ENCODE measurements at regions of chr11 and their contacts with region 1.

Region 1: GRCh38 chr11:64778508-64779346 is at the start of gene SF1:
- DNase-seq: peak; percentile 99
- ATAC-seq: peak; percentile 91
- H3K4me3 Mint-ChIP-seq: peak within 1 kb of the TSS; percentile 97
- H3K27ac Mint-ChIP-seq: peak within 1 kb of the TSS; percentile 99
- H3K4me1 Mint-ChIP-seq: peaks cover 57% of the 10 kb centered on the region
- H3K27me3 Mint-ChIP-seq: no peaks in the 10 kb centered on the region
- total RNA-seq, gene SF1: 318 to 362 TPM

Region 2: GRCh38 chr11:64358907-64359711 is 419.6 kb before region 1 on chr11 and contains the start of gene RPS6KA4:
- CTCF ChIA-PET with region 1: no interaction called
- POLR2A ChIA-PET with region 1: no interaction called
- intact Hi-C with region 1: loop called in 1 of 2 experiments (anchors 2 kb)
- DNase-seq: peak; percentile 80
- ATAC-seq: peak; percentile 69
- H3K4me3 Mint-ChIP-seq: peak within 1 kb of the TSS; percentile 85
- H3K27ac Mint-ChIP-seq: peak within 1 kb of the TSS; percentile 56
- H3K4me1 Mint-ChIP-seq: peaks cover 36% of the 10 kb centered on the region
- H3K27me3 Mint-ChIP-seq: no peaks in the 10 kb centered on the region
- total RNA-seq, gene RPS6KA4: 22.0 to 30.2 TPM

Region 3: GRCh38 chr11:64810271-64810890 is 31.7 kb after region 1 on chr11 and contains the start of gene MEN1:
- CTCF ChIA-PET with region 1: interaction called, 4 read pairs
- POLR2A ChIA-PET with region 1: interaction called, 6 read pairs
- intact Hi-C with region 1: loop called (anchors 1 to 2 kb)
- DNase-seq: peak; percentile 92
- ATAC-seq: peak; percentile 95
- H3K4me3 Mint-ChIP-seq: peak within 1 kb of the TSS; percentile 93
- H3K27ac Mint-ChIP-seq: peak within 1 kb of the TSS; percentile 85
- H3K4me1 Mint-ChIP-seq: peaks cover 21% of the 10 kb centered on the region
- H3K27me3 Mint-ChIP-seq: no peaks in the 10 kb centered on the region
- total RNA-seq, gene MEN1: 34.8 to 38.5 TPM

Region 4: DNA sequence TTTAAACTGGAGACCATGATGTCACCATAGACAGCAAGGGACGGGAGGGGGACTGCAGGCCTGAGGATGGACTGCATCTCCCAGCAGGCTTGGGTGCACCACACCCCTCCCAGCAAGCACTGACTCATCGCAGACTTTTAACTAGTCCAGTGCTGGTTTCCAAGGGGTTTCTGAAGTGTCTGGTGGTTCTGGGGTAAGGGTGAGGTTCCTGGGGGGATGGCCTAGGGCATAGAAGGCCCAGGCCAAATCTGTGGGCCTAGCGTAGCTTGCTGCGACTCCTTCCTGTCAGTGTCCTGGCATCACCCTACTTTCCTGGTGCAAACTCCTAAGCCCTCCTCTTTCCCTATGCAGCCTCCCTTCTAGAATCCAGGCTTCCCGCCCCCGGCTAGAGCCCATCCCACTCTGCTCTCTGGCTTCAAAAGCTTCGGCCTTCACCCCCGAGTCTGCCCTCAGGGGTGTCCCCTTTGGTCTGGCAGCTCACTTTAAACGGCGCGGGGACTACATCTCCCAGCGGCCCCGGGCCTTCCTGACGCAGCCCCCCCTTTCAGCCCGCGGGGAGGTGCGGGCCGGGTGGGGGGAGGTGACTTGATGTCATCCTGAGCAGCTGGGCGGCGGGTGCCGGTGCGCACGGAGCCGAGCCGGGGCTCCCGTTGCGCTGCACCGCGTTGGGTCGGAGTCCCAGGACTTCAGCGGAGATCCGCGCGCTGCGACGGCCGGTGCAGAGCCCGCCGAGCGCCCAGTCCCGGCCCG is 145.6 kb after region 1 on chr11 and contains the start of gene PPP2R5B:
- CTCF ChIA-PET with region 1: no interaction called
- POLR2A ChIA-PET with region 1: no interaction called
- intact Hi-C with region 1: loop called in 1 of 2 experiments (anchors 1 kb)
- DNase-seq: peak; percentile 95
- ATAC-seq: peak; percentile 95
- H3K4me3 Mint-ChIP-seq: peak within 1 kb of the TSS; percentile 81
- H3K27ac Mint-ChIP-seq: peak within 1 kb of the TSS; percentile 98
- H3K4me1 Mint-ChIP-seq: peaks cover 9% of the 10 kb centered on the region
- H3K27me3 Mint-ChIP-seq: no peaks in the 10 kb centered on the region
- total RNA-seq, gene PPP2R5B: 13.2 to 13.5 TPM

Region 5: GRCh38 chr11:65134386-65135253 is 355.9 kb after region 1 on chr11 and contains the start of gene SYVN1:
- CTCF ChIA-PET with region 1: no interaction called
- POLR2A ChIA-PET with region 1: no interaction called
- intact Hi-C with region 1: loop called in 1 of 2 experiments (anchors 1 kb)
- DNase-seq: peak; percentile 95
- ATAC-seq: peak; percentile 91
- H3K4me3 Mint-ChIP-seq: peak within 1 kb of the TSS; percentile 97
- H3K27ac Mint-ChIP-seq: peak within 1 kb of the TSS; percentile 97
- H3K4me1 Mint-ChIP-seq: peaks cover 27% of the 10 kb centered on the region
- H3K27me3 Mint-ChIP-seq: no peaks in the 10 kb centered on the region
- total RNA-seq, gene SYVN1: 24.3 to 31.1 TPM

Region 6: DNA sequence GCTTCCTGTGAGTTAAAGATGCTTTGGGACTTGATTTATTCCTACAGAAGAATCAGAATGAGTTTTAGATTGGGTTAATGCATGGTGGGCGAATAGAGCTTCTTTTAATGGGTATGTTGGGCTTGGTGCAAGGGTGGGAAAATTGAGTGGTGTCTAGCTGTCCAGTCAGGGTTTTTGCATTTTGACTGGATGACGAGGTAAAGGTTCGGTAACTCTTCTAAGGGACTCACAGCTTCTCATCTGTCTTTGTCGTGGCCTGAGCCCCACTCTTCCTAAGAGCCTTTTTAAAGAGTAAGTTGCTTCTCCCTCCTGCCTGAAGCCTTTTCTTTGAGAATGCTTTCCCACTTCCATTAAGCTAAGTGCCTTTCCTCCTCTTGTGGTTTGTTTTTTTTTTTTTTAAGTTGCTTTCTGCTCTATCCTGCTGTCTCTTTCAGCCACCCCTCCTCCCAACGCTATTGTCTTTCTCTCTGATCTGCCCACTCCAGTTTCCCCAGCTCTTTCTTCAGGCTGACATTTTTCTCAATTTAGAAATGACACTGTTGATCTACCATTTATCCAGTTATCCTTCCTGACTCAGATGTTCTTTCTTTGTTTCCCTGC is 556.1 kb after region 1 on chr11:
- CTCF ChIA-PET with region 1: no interaction called
- POLR2A ChIA-PET with region 1: no interaction called
- intact Hi-C with region 1: no loop called
- DNase-seq: no peak
- ATAC-seq: no peak
- H3K4me3 Mint-ChIP-seq: peak overlapping the region; percentile 81
- H3K27ac Mint-ChIP-seq: peak overlapping the region; percentile 87
- H3K4me1 Mint-ChIP-seq: peaks cover 34% of the 10 kb centered on the region
- H3K27me3 Mint-ChIP-seq: no peaks in the 10 kb centered on the region

Region 7: DNA sequence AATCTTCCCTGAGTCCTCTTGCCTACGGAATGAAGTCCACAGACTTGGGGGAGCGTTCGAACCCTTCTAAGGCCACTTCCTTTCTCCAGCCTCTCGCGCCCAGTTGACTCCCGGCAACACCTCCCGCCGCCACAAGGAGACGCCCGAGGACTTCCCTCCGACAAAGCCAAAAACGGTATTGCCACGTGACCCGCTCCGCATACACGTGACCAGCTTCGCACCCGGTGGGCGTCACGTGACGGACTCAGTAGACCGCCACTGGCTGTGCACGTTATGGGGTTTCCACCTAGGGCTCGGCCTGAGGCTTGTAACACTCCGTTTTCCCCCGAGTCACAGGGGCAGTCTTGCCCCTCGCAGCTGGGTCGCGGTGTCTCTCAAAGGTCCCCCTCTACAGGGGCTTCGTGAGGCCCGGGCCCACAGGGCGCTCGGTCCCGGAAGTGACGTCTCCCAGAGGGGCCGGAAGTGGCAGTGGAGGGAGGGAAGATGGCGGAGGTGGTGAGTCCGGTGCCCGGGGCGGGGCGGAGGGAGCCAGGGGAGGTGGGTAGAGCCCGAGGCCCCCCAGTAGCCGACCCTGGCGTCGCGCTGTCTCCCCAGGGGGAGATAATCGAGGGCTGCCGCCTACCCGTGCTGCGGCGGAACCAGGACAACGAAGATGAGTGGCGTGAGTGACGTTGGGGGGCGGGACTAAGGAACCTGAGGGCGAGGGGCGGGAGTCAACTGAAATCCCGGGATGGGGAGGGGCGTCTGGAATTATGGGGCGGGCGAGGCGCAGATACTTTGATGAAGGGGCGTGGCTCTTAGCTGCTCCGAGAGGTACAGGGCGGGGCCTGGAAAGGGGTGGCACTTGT is 933.3 kb after region 1 on chr11 and contains the start of gene KAT5:
- CTCF ChIA-PET with region 1: no interaction called
- POLR2A ChIA-PET with region 1: no interaction called
- intact Hi-C with region 1: loop called in 1 of 2 experiments (anchors 5 kb)
- DNase-seq: peak; percentile 99
- ATAC-seq: peak; percentile 86
- H3K4me3 Mint-ChIP-seq: peak within 1 kb of the TSS; percentile 90
- H3K27ac Mint-ChIP-seq: peak within 1 kb of the TSS; percentile 96
- H3K4me1 Mint-ChIP-seq: peaks cover 27% of the 10 kb centered on the region
- H3K27me3 Mint-ChIP-seq: no peaks in the 10 kb centered on the region
- total RNA-seq, gene KAT5: 56.5 to 65.1 TPM

Measured in activated CD4-positive, alpha-beta T cell treated with anti-CD3 and anti-CD28 coated beads for 36 hours (primary cell).